Calu3 (cell line): ENCODE measurements at regions of chrX and their contacts with region 1.

Region 1: DNA sequence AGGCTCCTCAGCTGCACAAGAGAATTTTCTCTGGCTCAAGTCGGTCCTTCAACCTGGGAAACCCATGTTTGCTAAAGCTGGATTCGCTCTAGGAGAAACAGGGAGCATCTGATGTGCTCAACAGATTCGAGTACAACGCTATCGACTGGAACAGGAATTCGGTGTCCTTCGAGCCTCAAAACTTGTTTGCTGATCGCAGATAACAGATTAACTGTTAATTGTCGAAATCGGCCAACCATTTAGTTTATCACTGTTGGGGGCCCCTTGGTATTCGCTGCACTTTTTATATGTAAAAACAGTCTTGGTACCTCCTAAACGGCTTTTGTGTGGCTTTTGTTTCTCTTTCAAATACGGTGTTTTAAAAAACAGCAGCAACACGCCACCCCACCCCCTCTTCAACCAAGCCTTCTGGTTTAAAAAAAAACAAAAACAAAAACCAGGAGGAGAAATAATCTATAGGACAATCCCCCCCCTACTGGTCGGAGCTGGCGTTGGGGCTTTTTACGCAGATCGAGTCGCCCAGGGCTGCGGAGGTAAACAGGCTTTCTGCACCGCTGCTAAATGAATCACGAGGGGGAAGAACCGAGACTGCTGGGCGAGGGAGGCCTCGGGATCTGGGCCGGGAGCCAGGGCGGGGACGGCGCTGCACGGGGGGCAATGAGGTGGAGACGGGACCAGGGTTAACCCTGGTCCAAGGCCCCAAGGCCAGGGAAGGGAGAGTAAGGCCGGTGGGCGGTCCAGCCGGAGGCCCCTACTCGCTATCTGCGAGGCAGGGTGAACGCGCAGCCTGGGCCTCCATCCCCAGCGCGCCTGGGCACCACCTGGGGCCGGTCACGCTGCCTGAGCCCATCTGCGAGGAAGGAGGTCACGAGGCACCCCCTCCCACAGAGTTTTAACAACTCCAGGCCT is 71.7 kb upstream of the BCOR start:
- DNase-seq: peak; percentile 78
- H3K4me3 Mint-ChIP-seq: no peak overlapping the region
- H3K27ac Mint-ChIP-seq: no peak overlapping the region
- H3K4me1 Mint-ChIP-seq: peaks cover 46% of the 10 kb centered on the region
- H3K27me3 Mint-ChIP-seq: peaks cover 9% of the 10 kb centered on the region
- CTCF ChIP-seq: peak; percentile 51

Region 2: GRCh38 chrX:39730662-39731397 is 438.6 kb before region 1 on chrX:
- CTCF ChIA-PET with region 1: no interaction called
- intact Hi-C with region 1: loop called (anchors 5 kb)
- DNase-seq: peak; percentile 68
- H3K4me3 Mint-ChIP-seq: no peak overlapping the region
- H3K27ac Mint-ChIP-seq: no peak overlapping the region
- H3K4me1 Mint-ChIP-seq: peaks cover 24% of the 10 kb centered on the region
- H3K27me3 Mint-ChIP-seq: no peaks in the 10 kb centered on the region
- CTCF ChIP-seq: peak; percentile 31

Region 3: GRCh38 chrX:39936886-39937770 is 232.3 kb before region 1 on chrX:
- CTCF ChIA-PET with region 1: no interaction called
- intact Hi-C with region 1: no loop called
- DNase-seq: no peak
- H3K4me3 Mint-ChIP-seq: no peak overlapping the region
- H3K27ac Mint-ChIP-seq: no peak overlapping the region
- H3K4me1 Mint-ChIP-seq: no peaks in the 10 kb centered on the region
- H3K27me3 Mint-ChIP-seq: peaks cover 3% of the 10 kb centered on the region
- CTCF ChIP-seq: no peak

Region 4: GRCh38 chrX:39953883-39954282 is 215.6 kb before region 1 on chrX:
- CTCF ChIA-PET with region 1: no interaction called
- intact Hi-C with region 1: loop called (anchors 10 kb)
- DNase-seq: peak; percentile 87
- H3K4me3 Mint-ChIP-seq: no peak overlapping the region
- H3K27ac Mint-ChIP-seq: peak overlapping the region; percentile 63
- H3K4me1 Mint-ChIP-seq: peaks cover 27% of the 10 kb centered on the region
- H3K27me3 Mint-ChIP-seq: no peaks in the 10 kb centered on the region
- CTCF ChIP-seq: no peak

Region 5: GRCh38 chrX:39984191-39984956 is 185.1 kb before region 1 on chrX:
- CTCF ChIA-PET with region 1: no interaction called
- intact Hi-C with region 1: no loop called
- DNase-seq: no peak
- H3K4me3 Mint-ChIP-seq: no peak overlapping the region
- H3K27ac Mint-ChIP-seq: no peak overlapping the region
- H3K4me1 Mint-ChIP-seq: no peaks in the 10 kb centered on the region
- H3K27me3 Mint-ChIP-seq: no peaks in the 10 kb centered on the region
- CTCF ChIP-seq: no peak

Region 6: GRCh38 chrX:40083120-40083978 is 86.1 kb before region 1 on chrX:
- CTCF ChIA-PET with region 1: no interaction called
- intact Hi-C with region 1: loop called (anchors 5 kb)
- DNase-seq: peak; percentile 30
- H3K4me3 Mint-ChIP-seq: peak overlapping the region; percentile 58
- H3K27ac Mint-ChIP-seq: no peak overlapping the region
- H3K4me1 Mint-ChIP-seq: no peaks in the 10 kb centered on the region
- H3K27me3 Mint-ChIP-seq: no peaks in the 10 kb centered on the region
- CTCF ChIP-seq: no peak

Region 7: GRCh38 chrX:40266490-40267333 is 97.3 kb after region 1 on chrX:
- CTCF ChIA-PET with region 1: interaction called, 3 read pairs
- intact Hi-C with region 1: loop called (anchors 5 kb)
- DNase-seq: peak; percentile 75
- H3K4me3 Mint-ChIP-seq: peak overlapping the region; percentile 67
- H3K27ac Mint-ChIP-seq: no peak overlapping the region
- H3K4me1 Mint-ChIP-seq: peaks cover 16% of the 10 kb centered on the region
- H3K27me3 Mint-ChIP-seq: no peaks in the 10 kb centered on the region
- CTCF ChIP-seq: peak; percentile 47